ENCODE measurements at regions of chr3 and their contacts with region 1.

Region 1: GRCh38 chr3:17742108-17742879 is at the start of gene TBC1D5:
- DNase-seq: peak; percentile 77 to 97 (median 88)
- ATAC-seq: peak; percentile 93
- H3K4me3 ChIP-seq: peak within 1 kb of the TSS; percentile 88
- H3K4me3 Mint-ChIP-seq: peak within 1 kb of the TSS; percentile 92
- H3K27ac ChIP-seq: peak within 1 kb of the TSS; percentile 54 to 79
- H3K27ac Mint-ChIP-seq: peak within 1 kb of the TSS; percentile 89
- H3K4me1 ChIP-seq: peaks cover 31% of the 10 kb centered on the region
- H3K4me1 Mint-ChIP-seq: peaks cover 47% of the 10 kb centered on the region
- H3K27me3 ChIP-seq: no peaks in the 10 kb centered on the region
- H3K27me3 Mint-ChIP-seq: no peaks in the 10 kb centered on the region
- CTCF ChIP-seq: no peak
- total RNA-seq, gene TBC1D5: 32.6 to 34.1 TPM

Region 2: GRCh38 chr3:17755836-17756235 is 13.5 kb after region 1 on chr3:
- CTCF ChIA-PET with region 1: interaction called, 5 read pairs
- POLR2A ChIA-PET with region 1: interaction called, 12 read pairs
- intact Hi-C with region 1: no loop called
- DNase-seq: peak in 2 of 14 experiments; percentile 20 to 61
- ATAC-seq: no peak
- H3K4me3 ChIP-seq: no peak overlapping the region
- H3K4me3 Mint-ChIP-seq: no peak overlapping the region
- H3K27ac ChIP-seq: no peak overlapping the region
- H3K27ac Mint-ChIP-seq: no peak overlapping the region
- H3K4me1 ChIP-seq: no peaks in the 10 kb centered on the region
- H3K4me1 Mint-ChIP-seq: peaks cover 10% of the 10 kb centered on the region
- H3K27me3 ChIP-seq: no peaks in the 10 kb centered on the region
- H3K27me3 Mint-ChIP-seq: no peaks in the 10 kb centered on the region
- CTCF ChIP-seq: no peak

Region 3: DNA sequence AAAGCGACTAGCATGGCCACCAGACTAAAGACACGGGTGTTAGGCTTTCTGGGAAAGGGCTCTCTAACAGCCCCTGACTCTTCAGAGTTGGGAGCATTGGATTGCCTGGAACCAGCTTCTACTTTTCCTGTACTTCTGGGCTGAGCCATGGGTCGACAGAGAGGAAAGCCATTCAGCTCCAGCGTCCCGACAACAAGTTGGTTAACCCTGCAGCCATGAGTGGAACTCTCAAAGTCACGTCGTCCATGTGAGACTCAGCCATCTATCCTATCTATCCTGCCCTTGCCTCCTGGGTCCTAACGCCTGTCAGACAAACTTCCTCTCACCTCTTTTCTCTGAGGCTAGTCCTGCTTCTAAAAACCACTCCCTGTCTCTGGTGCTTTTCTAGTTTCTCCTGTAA is 32.8 kb after region 1 on chr3:
- CTCF ChIA-PET with region 1: no interaction called
- POLR2A ChIA-PET with region 1: interaction called, 11 read pairs
- intact Hi-C with region 1: no loop called
- DNase-seq: peak in 4 of 14 experiments; percentile 2 to 18 (median 8)
- ATAC-seq: no peak
- H3K4me3 ChIP-seq: peak overlapping the region; percentile 3
- H3K4me3 Mint-ChIP-seq: peak overlapping the region; percentile 54
- H3K27ac ChIP-seq: no peak overlapping the region
- H3K27ac Mint-ChIP-seq: no peak overlapping the region
- H3K4me1 ChIP-seq: peaks cover 6% of the 10 kb centered on the region
- H3K4me1 Mint-ChIP-seq: peaks cover 26% of the 10 kb centered on the region
- H3K27me3 ChIP-seq: no peaks in the 10 kb centered on the region
- H3K27me3 Mint-ChIP-seq: peaks cover 19% of the 10 kb centered on the region
- CTCF ChIP-seq: no peak

Region 4: DNA sequence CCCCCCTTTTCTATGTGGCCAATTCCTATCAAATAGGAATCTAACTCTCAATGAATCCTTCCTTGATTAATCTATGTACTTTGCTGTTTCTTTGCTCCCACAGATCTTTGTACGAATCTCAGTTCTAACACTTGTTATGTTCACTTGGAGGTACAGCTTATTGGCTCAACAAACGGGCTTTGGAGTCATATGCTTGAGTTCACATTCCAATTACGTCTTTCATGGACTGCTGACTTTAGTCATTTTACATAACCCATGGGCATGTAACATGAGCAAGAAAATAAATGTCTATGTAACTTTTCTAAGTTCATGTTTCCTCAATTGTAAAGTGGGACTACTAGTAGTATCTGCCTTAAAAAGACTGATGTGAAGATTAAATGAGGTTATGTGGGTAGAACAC is 123.3 kb after region 1 on chr3:
- CTCF ChIA-PET with region 1: no interaction called
- POLR2A ChIA-PET with region 1: no interaction called
- intact Hi-C with region 1: no loop called
- DNase-seq: no peak
- ATAC-seq: no peak
- H3K4me3 ChIP-seq: no peak overlapping the region
- H3K4me3 Mint-ChIP-seq: no peak overlapping the region
- H3K27ac ChIP-seq: no peak overlapping the region
- H3K27ac Mint-ChIP-seq: no peak overlapping the region
- H3K4me1 ChIP-seq: no peaks in the 10 kb centered on the region
- H3K4me1 Mint-ChIP-seq: no peaks in the 10 kb centered on the region
- H3K27me3 ChIP-seq: peaks cover 0 to 6% of the 10 kb centered on the region in 2 experiments
- H3K27me3 Mint-ChIP-seq: peaks cover 9% of the 10 kb centered on the region
- CTCF ChIP-seq: no peak